ENCODE measurements at regions of chr19 and their contacts with region 1.

Region 1: GRCh38 chr19:39125554-39126311 is at the start of gene PAK4:
- DNase-seq: peak; percentile 100
- H3K27ac ChIP-seq: peak within 1 kb of the TSS; percentile 85
- CTCF ChIP-seq: no peak

Region 2: GRCh38 chr19:39328046-39328705 is 202.4 kb after region 1 on chr19:
- CTCF ChIA-PET with region 1: interaction called, 11 read pairs
- POLR2A ChIA-PET with region 1: no interaction called
- DNase-seq: peak; percentile 77
- H3K27ac ChIP-seq: no peak overlapping the region
- CTCF ChIP-seq: peak; percentile 94

Measured in RWPE1 (cell line).